ENCODE measurements at regions of chr3 and their contacts with region 1.

Region 1: GRCh38 chr3:49656541-49657112 is 17.5 kb upstream of the APEH start:
- DNase-seq: no peak
- H3K4me3 ChIP-seq: no peak overlapping the region
- H3K27ac ChIP-seq: no peak overlapping the region
- H3K4me1 ChIP-seq: peaks cover 4% of the 10 kb centered on the region
- H3K27me3 ChIP-seq: no peaks in the 10 kb centered on the region
- CTCF ChIP-seq: no peak

Region 2: GRCh38 chr3:49316696-49317457 is 339.8 kb before region 1 on chr3:
- CTCF ChIA-PET with region 1: no interaction called
- dilution Hi-C with region 1: no loop called
- in situ Hi-C with region 1: no loop called
- intact Hi-C with region 1: no loop called
- DNase-seq: no peak
- H3K4me3 ChIP-seq: no peak overlapping the region
- H3K27ac ChIP-seq: no peak overlapping the region
- H3K4me1 ChIP-seq: peaks cover 4% of the 10 kb centered on the region
- H3K27me3 ChIP-seq: no peaks in the 10 kb centered on the region
- CTCF ChIP-seq: no peak

Region 3: DNA sequence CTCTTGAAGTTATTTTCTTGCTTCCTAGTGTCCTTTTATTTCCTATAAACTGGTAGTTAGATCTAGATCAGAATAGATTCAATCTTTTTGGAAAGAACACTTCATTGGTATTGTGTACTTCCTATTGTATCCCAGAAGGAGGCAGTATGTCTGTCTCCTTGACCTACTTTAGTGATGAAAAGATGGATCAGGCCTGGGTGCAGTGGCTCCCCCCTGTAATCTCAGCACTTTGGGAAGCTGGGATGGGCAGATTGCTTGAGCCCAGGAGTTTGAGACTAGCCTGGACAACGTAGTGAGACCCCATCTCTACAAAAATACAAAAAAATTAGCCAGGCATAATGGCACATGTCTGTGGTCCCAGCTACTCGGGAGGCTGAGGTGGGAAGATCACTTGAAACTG is 90.3 kb before region 1 on chr3:
- CTCF ChIA-PET with region 1: no interaction called
- dilution Hi-C with region 1: loop called (anchors 5 kb)
- in situ Hi-C with region 1: no loop called
- intact Hi-C with region 1: no loop called
- DNase-seq: no peak
- H3K4me3 ChIP-seq: no peak overlapping the region
- H3K27ac ChIP-seq: no peak overlapping the region
- H3K4me1 ChIP-seq: peaks cover 8% of the 10 kb centered on the region
- H3K27me3 ChIP-seq: peaks cover 2% of the 10 kb centered on the region
- CTCF ChIP-seq: peak in 1 of 2 donors; percentile 40

Region 4: DNA sequence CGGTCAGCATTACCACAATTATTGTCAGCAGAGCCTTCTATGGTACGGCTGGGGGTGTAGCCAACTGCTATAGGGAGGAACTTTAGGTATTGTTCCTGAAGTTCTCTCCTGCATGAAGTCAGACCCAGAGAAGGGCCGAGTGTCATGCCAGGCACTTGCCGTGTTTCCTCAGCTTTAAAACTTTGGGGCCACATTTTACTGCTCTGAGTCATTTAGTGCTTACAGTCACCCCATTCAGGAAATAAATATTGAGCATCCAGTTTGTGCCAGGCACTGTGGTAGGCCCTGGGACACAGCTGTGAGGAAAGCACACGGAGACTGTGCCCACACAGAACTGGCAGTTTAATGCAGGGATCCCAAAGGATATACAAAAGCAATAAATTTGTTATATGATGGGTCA is 37.0 kb before region 1 on chr3:
- CTCF ChIA-PET with region 1: no interaction called
- dilution Hi-C with region 1: loop called (anchors 5 kb)
- in situ Hi-C with region 1: no loop called
- intact Hi-C with region 1: no loop called
- DNase-seq: no peak
- H3K4me3 ChIP-seq: no peak overlapping the region
- H3K27ac ChIP-seq: no peak overlapping the region
- H3K4me1 ChIP-seq: no peaks in the 10 kb centered on the region
- H3K27me3 ChIP-seq: no peaks in the 10 kb centered on the region
- CTCF ChIP-seq: no peak

Region 5: GRCh38 chr3:49689046-49689907 is 32.6 kb after region 1 on chr3 and contains the starts of genes MST1 and RNF123:
- CTCF ChIA-PET with region 1: no interaction called
- dilution Hi-C with region 1: no loop called
- in situ Hi-C with region 1: no loop called
- intact Hi-C with region 1: no loop called
- DNase-seq: peak; percentile 83
- H3K4me3 ChIP-seq: peak within 1 kb of the TSS; percentile 76 to 99 (median 94)
- H3K27ac ChIP-seq: peak within 1 kb of the TSS; percentile 36
- H3K4me1 ChIP-seq: peaks cover 18% of the 10 kb centered on the region
- H3K27me3 ChIP-seq: no peaks in the 10 kb centered on the region
- CTCF ChIP-seq: peak in 1 of 2 donors; percentile 43
- total RNA-seq, gene MST1: 8.3 to 13.6 TPM
- total RNA-seq, gene RNF123: 27.7 to 41.5 TPM